Activated CD4-positive, alpha-beta T cell treated with anti-CD3 and anti-CD28 coated beads for 36 hours (primary cell): ENCODE measurements at regions of chr10 and their contacts with region 1.

Region 1: DNA sequence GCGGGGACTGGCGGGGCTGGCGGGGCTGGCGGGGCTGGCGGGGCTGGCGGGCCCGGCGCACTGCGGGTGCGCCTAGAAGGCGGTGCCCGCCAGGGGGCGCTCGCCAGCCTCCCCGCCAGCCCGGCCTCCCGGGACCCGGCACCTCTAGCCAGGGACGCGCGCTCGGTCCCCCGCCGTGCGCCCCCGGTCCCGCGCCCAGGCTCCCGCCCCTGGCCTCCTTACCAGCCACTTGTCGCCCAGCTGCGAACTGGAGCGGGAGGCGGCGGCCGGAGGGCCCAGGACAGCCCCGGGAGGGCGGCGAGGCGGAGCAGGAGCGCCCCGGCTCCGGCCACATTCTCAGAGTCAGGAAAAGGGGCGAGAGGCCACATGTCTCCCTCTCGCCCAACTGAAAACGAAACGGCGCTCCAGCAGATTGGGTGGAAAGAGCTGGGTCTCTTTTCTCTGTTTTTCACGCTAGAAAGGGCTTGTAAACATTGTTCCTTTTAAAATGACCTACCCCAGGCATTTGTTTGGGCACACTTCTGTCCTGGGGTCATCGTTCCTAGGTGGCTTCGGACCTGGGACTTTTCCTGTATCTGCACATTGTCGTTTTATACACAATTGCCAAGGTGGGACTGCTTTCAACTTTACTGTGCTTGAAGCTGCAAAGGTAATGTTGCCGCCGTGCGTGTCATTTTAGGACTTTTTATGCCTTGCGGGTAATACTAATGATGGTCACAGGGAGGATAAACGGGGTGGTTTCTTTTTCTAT is 378 bp upstream of the PRKCQ start:
- DNase-seq: peak; percentile 93
- ATAC-seq: peak; percentile 72
- H3K4me3 Mint-ChIP-seq: peak overlapping the region; percentile 89
- H3K27ac Mint-ChIP-seq: peak overlapping the region; percentile 97
- H3K4me1 Mint-ChIP-seq: peaks cover 59% of the 10 kb centered on the region
- H3K27me3 Mint-ChIP-seq: no peaks in the 10 kb centered on the region

Region 2: DNA sequence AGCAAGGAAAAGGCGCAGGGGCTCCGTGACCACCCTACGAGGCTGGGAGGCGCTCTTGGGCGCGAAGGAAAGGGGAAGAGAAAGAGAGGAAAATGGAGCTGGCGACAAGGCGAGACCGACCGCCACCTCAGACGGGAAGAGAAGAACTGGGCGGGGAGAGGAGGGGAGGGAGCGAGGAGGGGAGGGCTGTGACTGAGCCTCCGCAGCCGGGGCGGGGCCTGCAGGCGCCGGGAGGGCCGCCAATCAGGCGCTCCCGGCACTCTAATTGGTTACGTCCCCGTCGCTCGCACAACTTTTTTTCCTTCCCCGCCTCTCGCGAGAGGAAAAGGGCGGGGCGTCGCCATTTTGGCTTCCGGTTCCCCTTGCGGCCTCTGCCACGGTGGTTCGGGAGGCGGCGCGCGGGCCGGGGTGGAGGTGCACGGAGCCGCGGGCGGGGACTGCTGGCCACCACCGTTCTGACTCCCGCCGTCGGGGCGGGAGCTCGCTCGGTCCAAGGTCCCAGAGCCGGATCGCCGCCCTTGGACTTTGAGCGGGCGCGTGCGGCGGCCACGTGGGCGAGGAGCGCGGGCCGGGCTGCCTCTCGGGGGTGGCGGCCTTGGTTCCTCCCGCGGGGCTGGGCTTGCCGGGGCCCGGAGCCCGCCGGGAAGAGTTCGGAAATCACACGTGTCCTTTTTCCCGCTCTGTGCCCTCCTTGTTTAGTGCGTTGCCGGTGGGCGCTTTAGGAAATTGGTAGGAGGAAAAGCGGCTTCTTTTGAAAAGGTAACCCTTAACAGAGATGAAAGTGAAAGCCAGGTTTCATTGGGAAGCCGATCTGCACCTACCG is 767.0 kb before region 1 on chr10 and contains the start of gene GDI2:
- CTCF ChIA-PET with region 1: no interaction called
- POLR2A ChIA-PET with region 1: no interaction called
- intact Hi-C with region 1: loop called in 1 of 2 experiments (anchors 10 kb)
- DNase-seq: peak; percentile 98
- ATAC-seq: peak; percentile 94
- H3K4me3 Mint-ChIP-seq: peak within 1 kb of the TSS; percentile 92
- H3K27ac Mint-ChIP-seq: peak within 1 kb of the TSS; percentile 98
- H3K4me1 Mint-ChIP-seq: peaks cover 60% of the 10 kb centered on the region
- H3K27me3 Mint-ChIP-seq: no peaks in the 10 kb centered on the region
- total RNA-seq, gene GDI2: 276 to 290 TPM

Region 3: GRCh38 chr10:6275022-6275997 is 305.1 kb before region 1 on chr10:
- CTCF ChIA-PET with region 1: no interaction called
- POLR2A ChIA-PET with region 1: no interaction called
- intact Hi-C with region 1: loop called (anchors 5 to 10 kb)
- DNase-seq: peak; percentile 97
- ATAC-seq: peak; percentile 91
- H3K4me3 Mint-ChIP-seq: peak overlapping the region; percentile 70
- H3K27ac Mint-ChIP-seq: peak overlapping the region; percentile 97
- H3K4me1 Mint-ChIP-seq: peaks cover 69% of the 10 kb centered on the region
- H3K27me3 Mint-ChIP-seq: no peaks in the 10 kb centered on the region

Region 4: DNA sequence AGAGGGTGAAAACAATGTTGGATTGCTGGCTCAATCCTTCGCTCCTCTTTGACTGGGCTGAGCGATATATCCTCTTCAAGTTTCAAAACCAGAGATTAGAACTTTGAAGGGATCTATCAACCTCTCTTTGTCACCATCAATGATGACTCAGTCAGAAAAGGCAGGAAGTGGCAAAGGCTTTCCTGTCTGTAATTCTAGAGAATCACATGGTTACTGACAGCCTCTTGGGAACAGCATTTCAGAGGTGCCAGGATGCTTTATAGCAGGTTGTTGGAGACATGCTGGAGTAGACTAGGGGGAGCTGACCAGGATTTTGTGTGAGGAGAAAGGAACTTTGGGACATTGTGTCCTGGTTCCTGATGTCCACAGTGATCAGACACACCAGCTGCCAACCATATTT is 81.7 kb before region 1 on chr10:
- CTCF ChIA-PET with region 1: interaction called, 4 read pairs
- POLR2A ChIA-PET with region 1: no interaction called
- intact Hi-C with region 1: loop called (anchors 1 to 2 kb)
- DNase-seq: peak; percentile 47
- ATAC-seq: peak; percentile 79
- H3K4me3 Mint-ChIP-seq: peak overlapping the region; percentile 46
- H3K27ac Mint-ChIP-seq: peak overlapping the region; percentile 89
- H3K4me1 Mint-ChIP-seq: peaks cover 52% of the 10 kb centered on the region
- H3K27me3 Mint-ChIP-seq: no peaks in the 10 kb centered on the region

Region 5: DNA sequence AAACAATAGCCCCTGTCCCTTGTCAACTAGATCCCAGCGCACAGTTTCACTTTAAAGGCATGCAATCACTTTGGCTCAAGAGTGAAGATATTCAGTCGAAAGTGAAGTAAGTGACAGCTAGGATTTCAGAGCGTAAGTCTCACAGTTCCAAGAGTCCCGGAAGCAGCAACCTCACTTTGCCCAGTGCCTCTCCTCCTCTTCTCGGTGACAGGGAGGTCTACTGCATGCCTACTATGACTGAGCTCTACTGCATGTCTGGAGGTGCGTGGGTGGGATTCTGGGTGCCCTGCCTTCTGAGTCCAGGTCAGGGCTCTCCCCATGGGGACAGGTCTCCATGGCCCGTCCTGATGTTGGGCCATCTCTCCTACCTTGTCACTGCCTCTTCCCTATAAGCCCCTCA is 17.4 kb before region 1 on chr10:
- CTCF ChIA-PET with region 1: interaction called, 31 read pairs
- POLR2A ChIA-PET with region 1: interaction called, 12 read pairs
- intact Hi-C with region 1: loop called in 1 of 2 experiments (anchors 2 kb)
- DNase-seq: peak; percentile 85
- ATAC-seq: peak; percentile 87
- H3K4me3 Mint-ChIP-seq: peak overlapping the region; percentile 69
- H3K27ac Mint-ChIP-seq: peak overlapping the region; percentile 81
- H3K4me1 Mint-ChIP-seq: peaks cover 92% of the 10 kb centered on the region
- H3K27me3 Mint-ChIP-seq: no peaks in the 10 kb centered on the region

Region 6: DNA sequence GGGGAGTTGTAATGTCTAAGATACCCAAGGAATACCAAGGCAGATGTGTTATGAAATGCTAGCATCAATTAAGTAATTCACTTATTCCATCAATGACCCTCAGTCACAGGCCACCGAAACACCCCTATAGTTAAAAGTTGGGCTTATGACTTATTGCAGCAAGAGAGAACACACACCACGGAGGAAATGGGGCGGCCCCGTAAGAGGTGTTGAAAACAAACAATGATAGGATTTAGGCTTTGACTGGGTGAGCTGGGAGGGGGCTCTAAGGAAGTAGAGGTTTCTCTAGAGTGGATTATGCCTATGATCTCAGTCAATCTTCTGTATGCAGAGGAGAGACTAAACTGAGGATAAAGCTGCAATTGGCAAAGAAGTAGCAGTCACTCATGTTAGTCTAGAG is 45.0 kb after region 1 on chr10:
- CTCF ChIA-PET with region 1: no interaction called
- POLR2A ChIA-PET with region 1: no interaction called
- intact Hi-C with region 1: no loop called
- DNase-seq: no peak
- ATAC-seq: no peak
- H3K4me3 Mint-ChIP-seq: no peak overlapping the region
- H3K27ac Mint-ChIP-seq: no peak overlapping the region
- H3K4me1 Mint-ChIP-seq: peaks cover 17% of the 10 kb centered on the region
- H3K27me3 Mint-ChIP-seq: no peaks in the 10 kb centered on the region

Region 7: DNA sequence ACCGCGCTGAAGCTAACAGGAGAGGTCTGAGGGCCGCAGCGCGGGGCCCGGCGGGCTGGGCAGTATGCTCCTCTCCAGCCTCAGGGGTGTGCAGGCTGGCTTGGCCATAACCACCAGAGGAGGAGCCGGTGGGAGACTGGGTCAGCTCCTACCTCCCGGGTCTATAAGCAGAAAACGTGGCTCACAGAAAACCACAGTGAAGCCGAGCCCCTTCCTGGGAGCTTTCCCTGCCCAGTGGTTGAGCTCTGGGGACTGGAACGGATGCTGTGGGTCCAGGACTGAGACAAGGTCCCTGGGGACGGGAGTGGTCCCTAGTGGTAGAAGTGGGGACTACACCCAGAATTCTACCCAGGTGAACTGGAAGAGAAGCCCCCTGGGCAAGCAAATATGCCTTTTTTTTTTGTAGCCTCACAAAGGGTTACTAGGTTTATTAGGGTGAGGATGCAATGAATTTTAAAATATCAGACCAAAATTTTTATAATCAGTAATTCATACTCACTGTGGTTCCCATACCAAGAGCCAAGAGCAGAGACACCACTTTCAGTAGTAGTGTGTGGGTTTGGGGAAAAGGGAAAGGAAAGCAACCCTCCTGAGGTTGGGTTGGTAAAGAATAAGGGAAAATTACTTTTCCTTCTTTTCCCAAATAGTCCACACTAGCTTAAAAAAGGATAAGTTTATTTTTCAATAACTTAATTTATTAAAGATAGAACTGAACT is 67.5 kb after region 1 on chr10:
- CTCF ChIA-PET with region 1: interaction called, 14 read pairs
- POLR2A ChIA-PET with region 1: interaction called, 6 read pairs
- intact Hi-C with region 1: loop called (anchors 1 kb)
- DNase-seq: peak; percentile 83
- ATAC-seq: peak; percentile 82
- H3K4me3 Mint-ChIP-seq: no peak overlapping the region
- H3K27ac Mint-ChIP-seq: peak overlapping the region; percentile 42
- H3K4me1 Mint-ChIP-seq: peaks cover 47% of the 10 kb centered on the region
- H3K27me3 Mint-ChIP-seq: no peaks in the 10 kb centered on the region

Region 8: DNA sequence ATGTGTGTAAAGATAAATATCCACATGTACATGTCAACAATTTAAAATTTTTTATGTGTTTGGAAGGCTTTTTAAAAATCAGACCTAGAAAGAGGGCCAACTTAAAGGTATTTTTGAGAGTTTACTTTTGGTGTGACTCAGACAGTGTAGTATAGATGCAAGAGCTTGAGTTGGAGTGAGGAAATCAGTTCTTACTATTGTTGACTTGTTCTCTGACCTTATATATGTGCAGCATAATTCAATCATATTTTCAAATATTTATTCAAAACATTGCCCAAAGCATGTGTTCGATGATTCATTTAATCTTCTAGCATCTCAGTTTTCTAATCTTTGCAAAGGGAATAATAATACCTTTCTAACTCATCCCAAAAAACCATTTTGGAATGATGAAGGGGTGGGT is 243.3 kb after region 1 on chr10:
- CTCF ChIA-PET with region 1: no interaction called
- POLR2A ChIA-PET with region 1: no interaction called
- intact Hi-C with region 1: no loop called
- DNase-seq: no peak
- ATAC-seq: no peak
- H3K4me3 Mint-ChIP-seq: no peak overlapping the region
- H3K27ac Mint-ChIP-seq: no peak overlapping the region
- H3K4me1 Mint-ChIP-seq: no peaks in the 10 kb centered on the region
- H3K27me3 Mint-ChIP-seq: peaks cover 2% of the 10 kb centered on the region